ENCODE measurements at regions of chr9 and their contacts with region 1.

Region 1: GRCh38 chr9:134024828-134025605 is at the start of gene BRD3OS:
- DNase-seq: peak; percentile 99
- ATAC-seq: peak; percentile 100
- H3K4me3 ChIP-seq: peak within 1 kb of the TSS; percentile 57 to 61
- H3K27ac ChIP-seq: no peak within 1 kb of the TSS
- H3K4me1 ChIP-seq: no peaks in the 10 kb centered on the region
- H3K27me3 ChIP-seq: no peaks in the 10 kb centered on the region
- total RNA-seq, gene BRD3OS: 8.3 to 17.3 TPM

Region 2: GRCh38 chr9:133935328-133936040 is 89.5 kb before region 1 on chr9:
- intact Hi-C with region 1: no loop called
- DNase-seq: peak in 1 of 2 donors; percentile 79
- ATAC-seq: peak; percentile 39
- H3K4me3 ChIP-seq: no peak overlapping the region
- H3K27ac ChIP-seq: no peak overlapping the region
- H3K4me1 ChIP-seq: no peaks in the 10 kb centered on the region
- H3K27me3 ChIP-seq: no peaks in the 10 kb centered on the region

Region 3: GRCh38 chr9:134135343-134136118 is 110.5 kb after region 1 on chr9 and contains the start of gene WDR5:
- intact Hi-C with region 1: loop called in 1 of 2 experiments (anchors 2 kb)
- DNase-seq: peak; percentile 96 to 98
- ATAC-seq: peak; percentile 96
- H3K4me3 ChIP-seq: peak within 1 kb of the TSS; percentile 89 to 97
- H3K27ac ChIP-seq: peak within 1 kb of the TSS in 1 of 2 donors; percentile 81
- H3K4me1 ChIP-seq: no peaks in the 10 kb centered on the region
- H3K27me3 ChIP-seq: no peaks in the 10 kb centered on the region
- total RNA-seq, gene WDR5: 15.4 to 25.1 TPM

Measured in aorta (tissue), 5 donors.